ENCODE measurements at regions of chr3 and their contacts with region 1.

Region 1: GRCh38 chr3:31981206-31982181 is at the starts of genes OSBPL10 and ZNF860:
- DNase-seq: peak; percentile 4
- H3K4me3 Mint-ChIP-seq: peak within 1 kb of the TSS; percentile 87
- H3K27ac Mint-ChIP-seq: peak within 1 kb of the TSS; percentile 62
- H3K4me1 Mint-ChIP-seq: peaks cover 27% of the 10 kb centered on the region
- H3K27me3 Mint-ChIP-seq: peaks cover 17% of the 10 kb centered on the region
- total RNA-seq, gene OSBPL10: 12.1 and 14.5 TPM in 2 replicates
- total RNA-seq, gene ZNF860: 0.34 and 0.81 TPM in 2 replicates

Region 2: GRCh38 chr3:31077021-31077601 is 904.4 kb before region 1 on chr3:
- intact Hi-C with region 1: loop called (anchors 1 kb)
- DNase-seq: peak; percentile 35
- H3K4me3 Mint-ChIP-seq: peak overlapping the region; percentile 38
- H3K27ac Mint-ChIP-seq: peak overlapping the region; percentile 85
- H3K4me1 Mint-ChIP-seq: peaks cover 46% of the 10 kb centered on the region
- H3K27me3 Mint-ChIP-seq: peaks cover 3% of the 10 kb centered on the region

Region 3: DNA sequence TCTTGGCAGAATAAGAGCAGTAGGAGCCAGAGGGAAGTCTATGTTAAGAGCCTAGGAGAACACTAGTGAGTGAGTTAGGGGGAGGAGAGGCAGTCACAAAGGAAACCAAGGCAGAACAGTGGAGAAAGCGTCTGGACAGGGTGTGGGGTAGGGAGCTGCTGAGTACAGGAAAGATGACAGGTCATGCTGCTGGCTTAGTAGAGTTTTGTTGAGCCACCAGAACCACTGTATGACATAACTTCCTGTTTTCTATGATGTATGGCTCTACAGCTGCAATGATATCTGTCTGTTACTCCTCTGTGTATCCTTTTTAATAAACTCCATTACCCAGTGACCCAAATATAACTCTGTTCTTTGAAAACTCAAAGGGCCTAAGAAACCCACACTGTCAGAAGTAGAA is 459.3 kb before region 1 on chr3:
- intact Hi-C with region 1: no loop called
- DNase-seq: peak; percentile 13
- H3K4me3 Mint-ChIP-seq: no peak overlapping the region
- H3K27ac Mint-ChIP-seq: peak overlapping the region; percentile 42
- H3K4me1 Mint-ChIP-seq: peaks cover 18% of the 10 kb centered on the region
- H3K27me3 Mint-ChIP-seq: no peaks in the 10 kb centered on the region

Region 4: GRCh38 chr3:31567036-31567435 is 414.5 kb before region 1 on chr3:
- intact Hi-C with region 1: no loop called
- DNase-seq: no peak
- H3K4me3 Mint-ChIP-seq: no peak overlapping the region
- H3K27ac Mint-ChIP-seq: peak overlapping the region; percentile 64
- H3K4me1 Mint-ChIP-seq: peaks cover 73% of the 10 kb centered on the region
- H3K27me3 Mint-ChIP-seq: no peaks in the 10 kb centered on the region

Region 5: GRCh38 chr3:31610700-31611275 is 370.7 kb before region 1 on chr3:
- intact Hi-C with region 1: loop called (anchors 5 kb)
- DNase-seq: no peak
- H3K4me3 Mint-ChIP-seq: no peak overlapping the region
- H3K27ac Mint-ChIP-seq: no peak overlapping the region
- H3K4me1 Mint-ChIP-seq: peaks cover 71% of the 10 kb centered on the region
- H3K27me3 Mint-ChIP-seq: no peaks in the 10 kb centered on the region

Region 6: GRCh38 chr3:31754575-31755278 is 226.8 kb before region 1 on chr3:
- intact Hi-C with region 1: loop called (anchors 1 kb)
- DNase-seq: no peak
- H3K4me3 Mint-ChIP-seq: peak overlapping the region; percentile 66
- H3K27ac Mint-ChIP-seq: peak overlapping the region; percentile 94
- H3K4me1 Mint-ChIP-seq: peaks cover 61% of the 10 kb centered on the region
- H3K27me3 Mint-ChIP-seq: no peaks in the 10 kb centered on the region

Region 7: GRCh38 chr3:31925271-31925630 is 56.2 kb before region 1 on chr3:
- intact Hi-C with region 1: loop called (anchors 1 kb)
- DNase-seq: no peak
- H3K4me3 Mint-ChIP-seq: peak overlapping the region; percentile 7
- H3K27ac Mint-ChIP-seq: peak overlapping the region; percentile 21
- H3K4me1 Mint-ChIP-seq: peaks cover 37% of the 10 kb centered on the region
- H3K27me3 Mint-ChIP-seq: no peaks in the 10 kb centered on the region

Region 8: GRCh38 chr3:32056559-32057290 is 75.2 kb after region 1 on chr3:
- intact Hi-C with region 1: no loop called
- DNase-seq: no peak
- H3K4me3 Mint-ChIP-seq: no peak overlapping the region
- H3K27ac Mint-ChIP-seq: no peak overlapping the region
- H3K4me1 Mint-ChIP-seq: peaks cover 7% of the 10 kb centered on the region
- H3K27me3 Mint-ChIP-seq: peaks cover 5% of the 10 kb centered on the region

Region 9: GRCh38 chr3:32106280-32106928 is 124.9 kb after region 1 on chr3 and contains the start of gene GPD1L:
- intact Hi-C with region 1: loop called (anchors 1 kb)
- DNase-seq: peak; percentile 93
- H3K4me3 Mint-ChIP-seq: peak within 1 kb of the TSS; percentile 97
- H3K27ac Mint-ChIP-seq: peak within 1 kb of the TSS; percentile 89
- H3K4me1 Mint-ChIP-seq: peaks cover 28% of the 10 kb centered on the region
- H3K27me3 Mint-ChIP-seq: no peaks in the 10 kb centered on the region
- total RNA-seq, gene GPD1L: 16.3 and 16.6 TPM in 2 replicates

Measured in activated T-helper 1 cell treated with anti-CD3 and anti-CD28 coated beads, Interleukin-12 subunit alpha, Interleukin-12 subunit beta, Interleukin-2, Interleukin-4 antibody, amounts not matched to agents 30 ng/mL and 10 ng/mL and 1 ng/mL, durations not matched to agents 14 hours and 24 hours and 36 hours (primary cell).